ENCODE measurements at regions of chr1 and their contacts with region 1.

Region 1: DNA sequence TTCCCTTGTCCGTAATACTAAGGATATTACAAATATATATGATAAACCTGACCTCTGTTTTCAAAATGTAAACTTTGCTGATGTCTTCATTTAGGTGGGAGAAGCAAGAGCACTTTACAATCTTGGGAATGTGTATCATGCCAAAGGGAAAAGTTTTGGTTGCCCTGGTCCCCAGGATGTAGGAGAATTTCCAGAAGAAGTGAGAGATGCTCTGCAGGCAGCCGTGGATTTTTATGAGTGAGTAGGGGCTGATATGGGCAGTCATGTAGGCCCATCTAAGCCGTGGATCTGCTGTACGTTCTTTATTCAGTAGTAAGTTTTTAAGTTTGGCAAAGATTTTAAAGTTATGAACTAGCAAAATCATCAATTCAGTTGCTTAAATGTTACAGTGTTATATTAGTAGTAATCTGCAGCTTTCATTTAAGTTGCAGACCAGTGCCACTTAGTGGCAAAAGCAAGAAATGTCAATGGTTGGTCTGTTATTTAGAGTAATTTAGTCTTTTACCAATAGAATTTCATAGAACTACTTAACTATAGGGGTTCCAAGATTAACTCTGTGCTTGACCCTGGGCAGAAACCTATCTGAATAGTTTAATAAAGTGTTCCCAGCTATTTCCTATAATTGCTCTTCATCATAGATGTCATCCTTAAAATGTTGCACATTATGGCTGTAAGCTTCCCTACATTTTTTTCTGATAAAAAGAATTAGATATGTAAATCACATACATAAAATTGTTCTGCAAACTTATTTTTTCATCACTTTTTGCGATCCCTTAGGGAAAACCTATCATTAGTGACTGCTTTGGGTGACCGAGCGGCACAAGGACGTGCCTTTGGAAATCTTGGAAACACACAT is 21.3 kb downstream of the GPSM2 start:
- DNase-seq: peak; percentile 33
- H3K4me3 ChIP-seq: no peak overlapping the region
- H3K27ac ChIP-seq: no peak overlapping the region
- H3K4me1 ChIP-seq: no peaks in the 10 kb centered on the region
- H3K27me3 ChIP-seq: no peaks in the 10 kb centered on the region
- CTCF ChIP-seq: peak; percentile 64

Region 2: DNA sequence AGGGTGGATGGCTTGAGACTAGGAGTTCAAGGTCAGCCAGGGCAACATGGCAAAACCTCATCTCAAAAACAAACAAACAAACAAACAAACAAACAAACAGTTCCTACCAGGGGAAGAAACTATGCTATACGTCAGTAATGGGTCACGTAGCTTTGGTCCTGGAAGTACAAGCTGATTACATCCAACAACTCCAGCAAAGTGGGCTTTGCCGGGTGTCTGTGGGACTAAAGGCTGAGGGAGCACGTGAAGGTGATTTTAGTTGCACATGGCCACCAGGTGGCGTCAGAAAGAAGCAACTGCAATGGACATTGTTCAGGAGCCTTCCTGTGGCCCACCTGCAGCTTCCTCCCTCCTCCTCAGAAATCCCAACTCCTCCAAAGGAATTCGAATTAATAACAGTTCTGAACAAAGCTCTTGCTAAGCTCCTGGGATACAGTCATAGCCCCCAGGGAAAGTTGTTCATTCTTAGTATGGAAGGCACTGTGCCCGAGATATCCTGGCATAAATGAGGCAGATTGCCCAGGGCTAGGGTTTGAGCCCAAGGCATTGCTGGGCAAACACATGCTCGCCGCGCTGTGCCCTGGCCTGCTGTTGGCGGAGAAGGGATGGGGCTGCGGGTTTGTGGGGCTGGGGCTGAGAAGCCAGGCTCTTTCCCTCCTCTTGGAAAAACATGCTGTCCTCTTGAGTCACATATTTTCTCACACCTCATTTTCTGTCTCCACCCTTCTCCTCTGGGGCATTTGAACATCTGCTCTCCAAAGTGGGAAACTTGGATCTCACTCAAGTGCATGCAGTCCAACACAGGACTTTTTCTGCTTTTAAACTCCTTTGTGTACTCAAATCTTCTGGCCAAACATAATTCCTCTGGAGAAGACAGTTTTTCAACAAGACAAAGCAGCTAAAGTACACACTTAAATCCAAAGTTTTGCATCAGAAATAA is 69.8 kb before region 1 on chr1:
- intact Hi-C with region 1: loop called (anchors 5 kb)
- DNase-seq: peak; percentile 78
- H3K4me3 ChIP-seq: no peak overlapping the region
- H3K27ac ChIP-seq: no peak overlapping the region
- H3K4me1 ChIP-seq: no peaks in the 10 kb centered on the region
- H3K27me3 ChIP-seq: no peaks in the 10 kb centered on the region
- CTCF ChIP-seq: peak; percentile 70